ENCODE measurements at regions of chr6 and their contacts with region 1.

Region 1: DNA sequence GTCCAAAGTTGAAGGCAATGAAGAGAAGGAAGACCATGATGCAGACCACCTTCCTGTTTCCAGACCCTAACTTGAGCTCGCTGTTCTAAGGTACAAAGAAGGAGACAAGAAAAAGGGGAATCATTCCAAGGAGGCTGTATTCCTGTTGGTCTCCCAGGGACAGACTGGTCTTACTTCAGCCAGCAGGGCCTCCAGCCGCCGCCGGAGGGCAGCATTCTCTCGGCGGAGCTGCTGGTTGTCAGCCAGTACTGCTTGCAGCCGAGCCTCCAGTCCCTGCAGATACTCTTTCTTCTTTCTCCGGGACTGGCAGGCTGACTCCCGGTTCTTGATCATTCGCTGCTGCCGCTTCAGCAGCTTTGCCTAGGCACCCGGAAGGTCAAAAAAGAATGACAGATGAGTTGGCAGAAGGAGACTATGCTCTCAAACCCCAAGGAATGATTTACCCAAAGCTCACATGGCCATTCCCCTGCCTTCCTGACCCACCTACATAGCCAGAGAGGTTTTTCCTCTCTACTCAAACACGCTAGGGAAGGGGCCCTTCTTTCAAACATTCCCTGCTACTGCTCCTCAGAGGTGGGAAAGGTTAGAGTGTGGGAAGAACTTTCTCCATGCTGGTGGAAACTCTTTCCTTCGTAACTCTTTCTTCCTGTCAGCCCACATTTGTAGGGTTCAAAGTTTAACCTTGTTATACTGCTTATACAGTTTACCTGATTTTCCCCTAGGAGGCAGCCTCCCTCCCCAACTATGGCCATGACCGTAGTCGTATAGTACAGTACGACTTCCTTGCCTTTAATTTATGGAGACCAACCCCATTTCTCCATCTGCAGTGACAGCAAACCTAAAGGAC is 9.0 kb downstream of the ATF6B start:
- DNase-seq: peak; percentile 91
- ATAC-seq: peak; percentile 89
- H3K4me3 Mint-ChIP-seq: no peak overlapping the region
- H3K27ac Mint-ChIP-seq: peak overlapping the region; percentile 81; the same call in 1 of the 2 replicates
- H3K4me1 Mint-ChIP-seq: no peaks in the 10 kb centered on the region
- H3K27me3 Mint-ChIP-seq: no peaks in the 10 kb centered on the region
- CTCF ChIP-seq: peak; percentile 67

Region 2: DNA sequence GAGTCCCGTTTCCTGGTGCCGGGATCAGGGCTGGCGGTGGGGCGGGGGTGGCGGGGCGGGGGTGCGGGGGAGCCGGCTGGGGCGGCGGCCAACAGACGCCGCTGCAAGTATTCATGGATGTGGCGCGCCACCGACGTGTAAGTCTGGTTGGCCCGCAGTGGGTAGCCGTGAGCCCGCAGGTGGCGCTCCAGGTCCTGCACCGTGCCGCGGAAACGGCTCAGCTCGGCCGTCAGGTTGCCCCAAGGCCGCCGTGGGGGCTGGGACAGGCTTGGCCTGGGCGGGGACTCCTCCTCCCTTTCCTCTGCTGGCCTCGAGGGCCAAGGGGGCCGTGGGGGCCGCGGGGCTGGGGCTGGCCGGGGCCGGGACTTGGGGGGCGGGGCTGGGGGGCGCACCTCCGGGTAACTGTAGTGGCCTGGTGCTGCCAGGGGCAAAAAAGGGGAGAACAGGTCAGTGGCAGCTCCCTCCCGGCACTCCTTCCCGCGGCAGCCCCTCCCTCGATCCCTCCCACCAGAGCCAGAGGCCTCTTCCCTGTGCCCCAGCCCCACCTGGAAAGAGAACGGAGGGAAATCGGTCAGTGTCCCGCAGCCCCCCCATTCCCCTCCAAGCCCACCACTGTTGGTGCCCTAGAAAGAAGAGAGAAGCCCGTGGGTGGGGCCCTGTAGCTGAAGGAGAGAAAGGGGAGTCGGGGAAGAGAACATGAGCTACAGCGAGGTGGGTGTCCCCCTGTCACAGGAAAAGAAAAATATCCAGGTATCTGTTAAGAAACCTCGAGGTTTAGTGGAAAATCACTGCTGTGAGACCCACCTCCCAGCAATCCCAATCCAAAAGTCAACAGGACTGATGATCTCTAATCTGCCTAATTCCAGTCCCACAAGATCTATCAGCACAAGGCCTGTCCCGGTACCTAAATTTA is 31.2 kb before region 1 on chr6:
- CTCF ChIA-PET with region 1: interaction called, 38 read pairs
- POLR2A ChIA-PET with region 1: no interaction called
- DNase-seq: peak; percentile 93
- ATAC-seq: peak; percentile 94
- H3K4me3 Mint-ChIP-seq: peak overlapping the region; percentile 53
- H3K27ac Mint-ChIP-seq: no peak overlapping the region
- H3K4me1 Mint-ChIP-seq: peaks cover 16% of the 10 kb centered on the region
- H3K27me3 Mint-ChIP-seq: peaks cover 13% of the 10 kb centered on the region
- CTCF ChIP-seq: 0 out of 2 replicates have a peak, but pooled peaks have one; percentile 27

Region 3: DNA sequence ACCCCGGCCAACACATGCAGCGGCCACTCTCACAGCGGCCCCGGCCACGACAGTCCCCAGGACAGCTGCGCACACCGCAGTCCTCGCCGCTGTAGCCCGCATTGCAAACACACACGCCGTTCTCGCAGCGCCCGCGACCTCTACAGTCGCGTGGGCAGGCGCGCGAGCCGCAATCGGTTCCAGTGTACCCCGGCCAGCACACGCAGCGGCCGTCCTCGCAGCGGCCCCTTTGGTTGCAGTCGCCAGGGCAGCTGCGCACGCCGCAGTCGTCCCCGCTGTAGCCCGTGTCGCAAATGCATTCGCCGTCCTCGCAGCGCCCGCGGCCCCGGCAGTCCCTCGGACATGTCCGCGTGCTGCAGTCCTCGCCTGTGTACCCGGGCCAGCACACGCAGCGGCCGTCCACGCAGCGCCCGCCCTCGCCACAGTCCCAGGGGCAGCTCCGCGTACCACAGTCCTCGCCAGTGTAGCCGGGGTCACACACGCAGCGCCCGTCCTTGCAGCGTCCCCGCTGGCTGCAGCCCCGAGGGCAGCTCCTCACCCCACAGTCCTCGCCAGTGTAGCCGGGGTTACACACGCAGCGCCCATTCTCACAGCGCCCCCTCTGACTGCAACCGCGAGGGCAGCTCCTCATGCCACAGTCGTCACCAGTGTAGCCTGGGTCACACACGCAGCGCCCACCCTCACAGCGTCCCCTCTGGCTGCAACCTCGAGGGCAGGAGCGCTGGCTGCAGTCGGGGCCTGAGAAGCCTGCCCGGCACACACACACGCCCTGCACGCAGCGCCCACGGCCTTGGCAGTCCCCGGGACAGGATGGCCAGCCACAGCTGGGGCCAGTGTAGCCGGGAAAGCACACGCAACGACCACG is 22.4 kb before region 1 on chr6:
- CTCF ChIA-PET with region 1: interaction called, 14 read pairs
- POLR2A ChIA-PET with region 1: no interaction called
- DNase-seq: no peak
- ATAC-seq: peak; percentile 76
- H3K4me3 Mint-ChIP-seq: no peak overlapping the region
- H3K27ac Mint-ChIP-seq: no peak overlapping the region
- H3K4me1 Mint-ChIP-seq: no peaks in the 10 kb centered on the region
- H3K27me3 Mint-ChIP-seq: peaks cover 2% of the 10 kb centered on the region; the same call in 1 of the 2 replicates
- CTCF ChIP-seq: no peak

Region 4: DNA sequence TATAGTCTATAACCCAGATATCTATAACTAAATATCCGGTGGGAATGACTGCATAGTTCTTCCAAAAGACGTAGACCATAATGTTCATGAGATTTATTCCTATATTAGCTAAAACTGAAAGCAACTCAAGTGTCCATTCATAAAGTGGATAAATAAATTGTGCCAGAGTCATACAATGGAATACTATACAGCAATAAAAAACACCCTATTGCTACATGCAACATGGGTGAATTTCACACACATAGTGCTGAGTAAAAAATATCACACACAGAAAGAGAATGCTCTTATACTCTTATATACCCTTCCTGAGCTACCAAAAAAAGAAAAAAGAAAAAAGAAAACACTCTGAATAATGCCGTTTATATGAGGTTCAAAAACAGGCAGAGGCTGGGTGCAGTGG is 16.8 kb before region 1 on chr6:
- CTCF ChIA-PET with region 1: interaction called, 14 read pairs
- POLR2A ChIA-PET with region 1: no interaction called
- DNase-seq: no peak
- ATAC-seq: no peak
- H3K4me3 Mint-ChIP-seq: no peak overlapping the region
- H3K27ac Mint-ChIP-seq: no peak overlapping the region
- H3K4me1 Mint-ChIP-seq: no peaks in the 10 kb centered on the region
- H3K27me3 Mint-ChIP-seq: peaks cover 20% of the 10 kb centered on the region
- CTCF ChIP-seq: no peak

Region 5: GRCh38 chr6:32108094-32108627 is 10.8 kb before region 1 on chr6:
- CTCF ChIA-PET with region 1: interaction called, 20 read pairs
- POLR2A ChIA-PET with region 1: interaction called, 3 read pairs
- DNase-seq: no peak
- ATAC-seq: peak; percentile 18
- H3K4me3 Mint-ChIP-seq: peak overlapping the region; percentile 14
- H3K27ac Mint-ChIP-seq: no peak overlapping the region
- H3K4me1 Mint-ChIP-seq: peaks cover 20% of the 10 kb centered on the region
- H3K27me3 Mint-ChIP-seq: peaks cover 26% of the 10 kb centered on the region
- CTCF ChIP-seq: no peak

Measured in WTC11 (cell line).